CD8-positive, alpha-beta memory T cell (primary cell): ENCODE measurements at regions of chr15 and their contacts with region 1.

Region 1: GRCh38 chr15:75639709-75640482 is at the start of gene IMP3:
- DNase-seq: peak; percentile 87 to 95 (median 92)
- H3K4me3 ChIP-seq: peak within 1 kb of the TSS; percentile 77
- H3K4me3 Mint-ChIP-seq: peak within 1 kb of the TSS; percentile 93 to 97 (median 93)
- H3K27ac ChIP-seq: peak within 1 kb of the TSS; percentile 92
- H3K27ac Mint-ChIP-seq: peak within 1 kb of the TSS; percentile 89 to 97 (median 96)
- H3K4me1 ChIP-seq: peaks cover 33% of the 10 kb centered on the region
- H3K4me1 Mint-ChIP-seq: peaks cover 33 to 46% (median 44%) of the 10 kb centered on the region in 3 donors
- H3K27me3 ChIP-seq: no peaks in the 10 kb centered on the region
- H3K27me3 Mint-ChIP-seq: no peaks in the 10 kb centered on the region
- total RNA-seq, gene IMP3: 123 to 134 TPM

Region 2: GRCh38 chr15:75367913-75368688 is 271.8 kb before region 1 on chr15 and contains the start of gene MAN2C1:
- CTCF ChIA-PET with region 1: interaction called, 39 read pairs
- POLR2A ChIA-PET with region 1: interaction called, 59 read pairs
- DNase-seq: peak; percentile 85 to 94 (median 87)
- H3K4me3 ChIP-seq: peak within 1 kb of the TSS; percentile 88
- H3K4me3 Mint-ChIP-seq: peak within 1 kb of the TSS; percentile 88 to 97 (median 92)
- H3K27ac ChIP-seq: peak within 1 kb of the TSS; percentile 97
- H3K27ac Mint-ChIP-seq: peak within 1 kb of the TSS; percentile 94 to 99 (median 96)
- H3K4me1 ChIP-seq: peaks cover 16% of the 10 kb centered on the region
- H3K4me1 Mint-ChIP-seq: peaks cover 24 to 28% (median 25%) of the 10 kb centered on the region in 3 donors
- H3K27me3 ChIP-seq: no peaks in the 10 kb centered on the region
- H3K27me3 Mint-ChIP-seq: no peaks in the 10 kb centered on the region
- total RNA-seq, gene MAN2C1: 127 to 133 TPM

Region 3: GRCh38 chr15:75420698-75421097 is 219.2 kb before region 1 on chr15:
- CTCF ChIA-PET with region 1: no interaction called
- POLR2A ChIA-PET with region 1: no interaction called
- DNase-seq: no peak
- H3K4me3 ChIP-seq: no peak overlapping the region
- H3K4me3 Mint-ChIP-seq: no peak overlapping the region
- H3K27ac ChIP-seq: no peak overlapping the region
- H3K27ac Mint-ChIP-seq: peak overlapping the region in 1 of 8 donors; percentile 7
- H3K4me1 ChIP-seq: no peaks in the 10 kb centered on the region
- H3K4me1 Mint-ChIP-seq: peaks cover 13 to 32% (median 16%) of the 10 kb centered on the region in 3 donors
- H3K27me3 ChIP-seq: no peaks in the 10 kb centered on the region
- H3K27me3 Mint-ChIP-seq: no peaks in the 10 kb centered on the region

Region 4: GRCh38 chr15:75508840-75509532 is 130.9 kb before region 1 on chr15:
- CTCF ChIA-PET with region 1: interaction called, 18 read pairs
- POLR2A ChIA-PET with region 1: interaction called, 6 read pairs
- DNase-seq: peak in 2 of 5 donors; percentile 22 to 45
- H3K4me3 ChIP-seq: no peak overlapping the region
- H3K4me3 Mint-ChIP-seq: no peak overlapping the region
- H3K27ac ChIP-seq: no peak overlapping the region
- H3K27ac Mint-ChIP-seq: peak overlapping the region in 2 of 8 donors; percentile 17 to 30
- H3K4me1 ChIP-seq: no peaks in the 10 kb centered on the region
- H3K4me1 Mint-ChIP-seq: peaks cover 0 to 4% (median 0%) of the 10 kb centered on the region in 3 donors
- H3K27me3 ChIP-seq: no peaks in the 10 kb centered on the region
- H3K27me3 Mint-ChIP-seq: peaks cover 0 to 1% of the 10 kb centered on the region in 2 donors

Region 5: GRCh38 chr15:75578948-75579920 is 60.7 kb before region 1 on chr15 and contains the start of gene PTPN9:
- CTCF ChIA-PET with region 1: interaction called, 5 read pairs
- POLR2A ChIA-PET with region 1: interaction called, 27 read pairs
- DNase-seq: peak; percentile 52 to 80 (median 57)
- H3K4me3 ChIP-seq: peak within 1 kb of the TSS; percentile 68
- H3K4me3 Mint-ChIP-seq: peak within 1 kb of the TSS; percentile 90 to 97 (median 95)
- H3K27ac ChIP-seq: peak within 1 kb of the TSS; percentile 66
- H3K27ac Mint-ChIP-seq: peak within 1 kb of the TSS; percentile 85 to 98 (median 95)
- H3K4me1 ChIP-seq: peaks cover 6% of the 10 kb centered on the region
- H3K4me1 Mint-ChIP-seq: peaks cover 22 to 27% (median 24%) of the 10 kb centered on the region in 3 donors
- H3K27me3 ChIP-seq: no peaks in the 10 kb centered on the region
- H3K27me3 Mint-ChIP-seq: no peaks in the 10 kb centered on the region
- total RNA-seq, gene PTPN9: 22.0 to 22.3 TPM

Region 6: GRCh38 chr15:75606711-75607699 is 32.9 kb before region 1 on chr15:
- CTCF ChIA-PET with region 1: interaction called, 5 read pairs
- POLR2A ChIA-PET with region 1: interaction called, 19 read pairs
- DNase-seq: peak in 4 of 5 donors; percentile 5 to 51 (median 42)
- H3K4me3 ChIP-seq: peak overlapping the region; percentile 45
- H3K4me3 Mint-ChIP-seq: peak overlapping the region; percentile 33 to 88 (median 77)
- H3K27ac ChIP-seq: peak overlapping the region; percentile 45
- H3K27ac Mint-ChIP-seq: peak overlapping the region; percentile 51 to 95 (median 85)
- H3K4me1 ChIP-seq: peaks cover 43% of the 10 kb centered on the region
- H3K4me1 Mint-ChIP-seq: peaks cover 40 to 57% (median 50%) of the 10 kb centered on the region in 3 donors
- H3K27me3 ChIP-seq: no peaks in the 10 kb centered on the region
- H3K27me3 Mint-ChIP-seq: no peaks in the 10 kb centered on the region

Region 7: GRCh38 chr15:75625542-75626347 is 14.2 kb before region 1 on chr15 and contains the start of gene SNUPN:
- CTCF ChIA-PET with region 1: interaction called, 16 read pairs
- POLR2A ChIA-PET with region 1: interaction called, 51 read pairs
- DNase-seq: peak; percentile 85 to 95 (median 87)
- H3K4me3 ChIP-seq: peak within 1 kb of the TSS; percentile 78
- H3K4me3 Mint-ChIP-seq: peak within 1 kb of the TSS; percentile 89 to 97 (median 90)
- H3K27ac ChIP-seq: peak within 1 kb of the TSS; percentile 85
- H3K27ac Mint-ChIP-seq: peak within 1 kb of the TSS; percentile 96 to 100 (median 98)
- H3K4me1 ChIP-seq: peaks cover 24% of the 10 kb centered on the region
- H3K4me1 Mint-ChIP-seq: peaks cover 19 to 33% (median 28%) of the 10 kb centered on the region in 3 donors
- H3K27me3 ChIP-seq: no peaks in the 10 kb centered on the region
- H3K27me3 Mint-ChIP-seq: no peaks in the 10 kb centered on the region
- total RNA-seq, gene SNUPN: 24.6 to 26.9 TPM

Region 8: GRCh38 chr15:75758071-75758872 is 118.4 kb after region 1 on chr15:
- CTCF ChIA-PET with region 1: no interaction called
- POLR2A ChIA-PET with region 1: no interaction called
- DNase-seq: peak; percentile 25 to 54 (median 43)
- H3K4me3 ChIP-seq: peak overlapping the region; percentile 66
- H3K4me3 Mint-ChIP-seq: peak overlapping the region; percentile 67 to 92 (median 78)
- H3K27ac ChIP-seq: peak overlapping the region; percentile 54
- H3K27ac Mint-ChIP-seq: peak overlapping the region in 4 of 8 donors; percentile 10 to 84 (median 62)
- H3K4me1 ChIP-seq: peaks cover 6% of the 10 kb centered on the region
- H3K4me1 Mint-ChIP-seq: peaks cover 6 to 16% (median 15%) of the 10 kb centered on the region in 3 donors
- H3K27me3 ChIP-seq: no peaks in the 10 kb centered on the region
- H3K27me3 Mint-ChIP-seq: peaks cover 8% of the 10 kb centered on the region in 2 donors

Region 9: DNA sequence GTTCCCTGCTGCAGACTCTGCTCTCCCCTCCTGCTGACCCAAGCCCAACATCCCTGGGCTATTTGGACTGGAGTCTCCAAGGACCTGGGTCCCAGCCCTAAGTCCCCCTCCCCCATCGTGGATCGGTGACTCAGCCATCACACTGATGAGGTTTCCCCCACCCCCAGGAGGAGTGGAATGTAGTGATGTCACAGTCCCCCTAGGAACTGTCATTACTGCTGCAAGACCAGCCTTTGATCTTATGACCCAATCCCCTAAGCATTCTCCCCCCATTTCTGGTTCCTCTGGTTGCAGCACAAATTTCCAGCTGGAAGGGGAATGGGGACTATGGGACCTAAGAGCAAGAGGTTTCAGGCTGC is 136.1 kb after region 1 on chr15:
- CTCF ChIA-PET with region 1: no interaction called
- POLR2A ChIA-PET with region 1: no interaction called
- DNase-seq: no peak
- H3K4me3 ChIP-seq: no peak overlapping the region
- H3K4me3 Mint-ChIP-seq: no peak overlapping the region
- H3K27ac ChIP-seq: no peak overlapping the region
- H3K27ac Mint-ChIP-seq: peak overlapping the region in 1 of 8 donors; percentile 86
- H3K4me1 ChIP-seq: no peaks in the 10 kb centered on the region
- H3K4me1 Mint-ChIP-seq: no peaks in the 10 kb centered on the region
- H3K27me3 ChIP-seq: no peaks in the 10 kb centered on the region
- H3K27me3 Mint-ChIP-seq: peaks cover 7 to 10% of the 10 kb centered on the region in 2 donors

Region 10: GRCh38 chr15:75928680-75929608 is 289.0 kb after region 1 on chr15:
- CTCF ChIA-PET with region 1: no interaction called
- POLR2A ChIA-PET with region 1: no interaction called
- DNase-seq: no peak
- H3K4me3 ChIP-seq: no peak overlapping the region
- H3K4me3 Mint-ChIP-seq: no peak overlapping the region
- H3K27ac ChIP-seq: no peak overlapping the region
- H3K27ac Mint-ChIP-seq: peak overlapping the region in 1 of 8 donors; percentile 68
- H3K4me1 ChIP-seq: peaks cover 13% of the 10 kb centered on the region
- H3K4me1 Mint-ChIP-seq: peaks cover 42 to 52% (median 42%) of the 10 kb centered on the region in 3 donors
- H3K27me3 ChIP-seq: no peaks in the 10 kb centered on the region
- H3K27me3 Mint-ChIP-seq: no peaks in the 10 kb centered on the region